CD4-positive, alpha-beta memory T cell (primary cell): ENCODE measurements at regions of chr16 and their contacts with region 1.

Region 1: GRCh38 chr16:88856828-88857733 is at the starts of genes GALNS and TRAPPC2L:
- DNase-seq: peak; percentile 96 to 98 (median 97)
- H3K4me3 ChIP-seq: peak within 1 kb of the TSS; percentile 67 to 93
- H3K4me3 Mint-ChIP-seq: peak within 1 kb of the TSS; percentile 94 to 100 (median 97)
- H3K27ac ChIP-seq: peak within 1 kb of the TSS; percentile 76
- H3K27ac Mint-ChIP-seq: peak within 1 kb of the TSS; percentile 95 to 99 (median 97)
- H3K4me1 ChIP-seq: peaks cover 27% of the 10 kb centered on the region
- H3K4me1 Mint-ChIP-seq: peaks cover 18 to 43% (median 28%) of the 10 kb centered on the region in 4 donors
- H3K27me3 ChIP-seq: no peaks in the 10 kb centered on the region
- H3K27me3 Mint-ChIP-seq: peaks cover 0 to 2% of the 10 kb centered on the region in 2 donors
- total RNA-seq, gene GALNS: 58.8 to 65.7 TPM
- total RNA-seq, gene TRAPPC2L: 66.6 to 67.1 TPM

Region 2: GRCh38 chr16:88633684-88634140 is 223.4 kb before region 1 on chr16:
- CTCF ChIA-PET with region 1: no interaction called
- POLR2A ChIA-PET with region 1: no interaction called
- intact Hi-C with region 1: loop called (anchors 5 kb)
- DNase-seq: peak; percentile 52 to 77 (median 68)
- H3K4me3 ChIP-seq: peak overlapping the region in 1 of 2 donors; percentile 53
- H3K4me3 Mint-ChIP-seq: peak overlapping the region; percentile 69 to 85 (median 78)
- H3K27ac ChIP-seq: peak overlapping the region; percentile 62
- H3K27ac Mint-ChIP-seq: peak overlapping the region; percentile 66 to 93 (median 79)
- H3K4me1 ChIP-seq: peaks cover 42% of the 10 kb centered on the region
- H3K4me1 Mint-ChIP-seq: peaks cover 14 to 44% (median 28%) of the 10 kb centered on the region in 4 donors
- H3K27me3 ChIP-seq: peaks cover 2% of the 10 kb centered on the region
- H3K27me3 Mint-ChIP-seq: peaks cover 0 to 6% of the 10 kb centered on the region in 2 donors

Region 3: GRCh38 chr16:88737298-88738150 is 119.6 kb before region 1 on chr16:
- CTCF ChIA-PET with region 1: interaction called, 40 read pairs
- POLR2A ChIA-PET with region 1: interaction called, 18 read pairs
- intact Hi-C with region 1: loop called (anchors 1 kb)
- DNase-seq: peak; percentile 55 to 80 (median 75)
- H3K4me3 ChIP-seq: no peak overlapping the region
- H3K4me3 Mint-ChIP-seq: no peak overlapping the region
- H3K27ac ChIP-seq: peak overlapping the region; percentile 6
- H3K27ac Mint-ChIP-seq: peak overlapping the region in 4 of 7 donors; percentile 52 to 78 (median 54)
- H3K4me1 ChIP-seq: peaks cover 6% of the 10 kb centered on the region
- H3K4me1 Mint-ChIP-seq: peaks cover 0 to 13% (median 2%) of the 10 kb centered on the region in 4 donors
- H3K27me3 ChIP-seq: no peaks in the 10 kb centered on the region
- H3K27me3 Mint-ChIP-seq: no peaks in the 10 kb centered on the region

Region 4: GRCh38 chr16:88811769-88812512 is 45.1 kb before region 1 on chr16 and contains the start of gene APRT:
- CTCF ChIA-PET with region 1: interaction called, 35 read pairs
- POLR2A ChIA-PET with region 1: interaction called, 53 read pairs
- intact Hi-C with region 1: loop called (anchors 1 kb)
- DNase-seq: peak; percentile 94 to 99 (median 97)
- H3K4me3 ChIP-seq: peak within 1 kb of the TSS; percentile 90 to 94
- H3K4me3 Mint-ChIP-seq: peak within 1 kb of the TSS; percentile 95 to 100 (median 97)
- H3K27ac ChIP-seq: peak within 1 kb of the TSS; percentile 67
- H3K27ac Mint-ChIP-seq: peak within 1 kb of the TSS; percentile 88 to 98 (median 97)
- H3K4me1 ChIP-seq: peaks cover 21% of the 10 kb centered on the region
- H3K4me1 Mint-ChIP-seq: peaks cover 1 to 28% (median 15%) of the 10 kb centered on the region in 4 donors
- H3K27me3 ChIP-seq: no peaks in the 10 kb centered on the region
- H3K27me3 Mint-ChIP-seq: no peaks in the 10 kb centered on the region
- total RNA-seq, gene APRT: 171 to 175 TPM

Region 5: GRCh38 chr16:89026121-89026612 is 169.1 kb after region 1 on chr16:
- CTCF ChIA-PET with region 1: no interaction called
- POLR2A ChIA-PET with region 1: no interaction called
- intact Hi-C with region 1: no loop called
- DNase-seq: peak; percentile 41 to 75 (median 42)
- H3K4me3 ChIP-seq: no peak overlapping the region
- H3K4me3 Mint-ChIP-seq: peak overlapping the region in 3 of 8 donors; percentile 12 to 39 (median 22)
- H3K27ac ChIP-seq: no peak overlapping the region
- H3K27ac Mint-ChIP-seq: peak overlapping the region in 6 of 7 donors; percentile 10 to 65 (median 42)
- H3K4me1 ChIP-seq: peaks cover 13% of the 10 kb centered on the region
- H3K4me1 Mint-ChIP-seq: peaks cover 8 to 18% (median 13%) of the 10 kb centered on the region in 4 donors
- H3K27me3 ChIP-seq: no peaks in the 10 kb centered on the region
- H3K27me3 Mint-ChIP-seq: peaks cover 4 to 5% of the 10 kb centered on the region in 2 donors

Region 6: DNA sequence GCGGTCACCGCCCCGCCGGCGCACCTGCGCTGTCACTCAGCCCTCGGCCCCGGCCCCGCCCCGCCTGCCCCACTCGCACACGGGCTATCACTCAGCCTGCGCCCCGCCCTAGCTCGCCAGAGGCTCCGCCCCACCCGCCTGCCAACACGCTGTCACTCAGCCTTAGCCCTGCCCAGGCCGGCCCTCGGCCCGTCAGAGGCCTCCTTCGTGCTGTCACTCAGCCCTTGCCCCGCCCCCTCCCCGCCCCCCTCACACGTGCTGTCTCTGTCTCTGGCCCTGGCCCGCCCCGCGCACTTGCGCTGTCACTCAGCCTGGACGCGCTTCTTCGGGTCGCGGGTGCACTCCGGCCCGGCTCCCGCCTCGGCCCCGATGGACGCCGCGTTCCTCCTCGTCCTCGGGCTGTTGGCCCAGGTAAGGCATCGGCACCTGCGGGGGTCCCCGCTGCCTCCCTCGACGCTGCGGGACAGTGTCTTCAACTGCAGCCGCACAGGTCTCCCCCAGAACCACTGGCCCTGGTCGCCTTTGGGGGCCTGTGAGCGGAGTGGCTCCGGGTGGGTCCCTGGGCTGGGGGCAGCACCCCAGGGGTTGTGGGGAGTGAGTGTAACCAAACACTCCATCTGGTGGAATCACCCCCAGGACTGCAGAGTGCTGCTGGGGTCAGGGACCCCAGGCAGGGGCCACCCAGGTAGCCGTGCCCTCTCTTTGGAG is 314.5 kb after region 1 on chr16 and contains the start of gene CDH15:
- CTCF ChIA-PET with region 1: interaction called, 3 read pairs
- POLR2A ChIA-PET with region 1: interaction called, 7 read pairs
- intact Hi-C with region 1: loop called (anchors 1 kb)
- DNase-seq: peak; percentile 88 to 97 (median 93)
- H3K4me3 ChIP-seq: peak within 1 kb of the TSS in 1 of 2 donors; percentile 57
- H3K4me3 Mint-ChIP-seq: peak within 1 kb of the TSS; percentile 59 to 87 (median 74)
- H3K27ac ChIP-seq: no peak within 1 kb of the TSS
- H3K27ac Mint-ChIP-seq: peak within 1 kb of the TSS in 6 of 7 donors; percentile 49 to 89 (median 74)
- H3K4me1 ChIP-seq: peaks cover 25% of the 10 kb centered on the region
- H3K4me1 Mint-ChIP-seq: peaks cover 4 to 8% (median 7%) of the 10 kb centered on the region in 4 donors
- H3K27me3 ChIP-seq: no peaks in the 10 kb centered on the region
- H3K27me3 Mint-ChIP-seq: peaks cover 0 to 1% of the 10 kb centered on the region in 2 donors
- total RNA-seq, gene CDH15: not detected